T-cell (primary cell): ENCODE measurements at regions of chr6 and their contacts with region 1.

Region 1: DNA sequence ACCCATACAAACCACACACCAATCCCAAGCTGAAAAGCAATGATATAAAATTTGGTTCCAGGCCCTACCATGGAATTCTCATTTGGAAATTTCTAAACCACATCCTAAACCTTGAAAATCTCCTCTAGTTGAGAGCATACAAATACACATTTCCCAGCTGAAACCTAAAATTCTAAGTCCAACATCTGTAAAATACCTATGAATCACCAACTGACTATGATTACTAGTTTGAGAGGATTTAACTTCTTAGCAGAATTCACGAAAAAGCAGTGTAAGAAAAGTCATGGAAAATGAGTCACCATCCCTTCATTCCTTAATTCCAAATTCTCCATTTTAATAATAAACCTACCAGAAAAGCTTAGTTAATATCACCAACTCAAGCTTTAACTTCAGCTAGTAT is 15.4 kb downstream of the RANBP9 start:
- DNase-seq: no peak
- ATAC-seq: no peak
- H3K4me3 ChIP-seq: no peak overlapping the region
- H3K4me3 Mint-ChIP-seq: peak overlapping the region in 1 of 3 donors; percentile 22
- H3K27ac ChIP-seq: peak overlapping the region; percentile 65
- H3K27ac Mint-ChIP-seq: peak overlapping the region; percentile 89
- H3K4me1 ChIP-seq: peaks cover 21 to 27% of the 10 kb centered on the region in 2 experiments
- H3K4me1 Mint-ChIP-seq: peaks cover 64 to 86% (median 82%) of the 10 kb centered on the region in 3 donors
- H3K27me3 ChIP-seq: no peaks in the 10 kb centered on the region
- H3K27me3 Mint-ChIP-seq: no peaks in the 10 kb centered on the region

Region 2: GRCh38 chr6:12343440-12344162 is 1352.6 kb before region 1 on chr6:
- CTCF ChIA-PET with region 1: no interaction called
- POLR2A ChIA-PET with region 1: no interaction called
- DNase-seq: no peak
- ATAC-seq: no peak
- H3K4me3 ChIP-seq: no peak overlapping the region
- H3K4me3 Mint-ChIP-seq: no peak overlapping the region
- H3K27ac ChIP-seq: no peak overlapping the region
- H3K27ac Mint-ChIP-seq: no peak overlapping the region
- H3K4me1 ChIP-seq: no peaks in the 10 kb centered on the region
- H3K4me1 Mint-ChIP-seq: no peaks in the 10 kb centered on the region
- H3K27me3 ChIP-seq: peaks cover 0 to 15% of the 10 kb centered on the region in 2 experiments
- H3K27me3 Mint-ChIP-seq: peaks cover 7 to 8% of the 10 kb centered on the region in 2 donors

Region 3: GRCh38 chr6:12545619-12546409 is 1150.4 kb before region 1 on chr6:
- CTCF ChIA-PET with region 1: no interaction called
- POLR2A ChIA-PET with region 1: no interaction called
- DNase-seq: no peak
- ATAC-seq: no peak
- H3K4me3 ChIP-seq: no peak overlapping the region
- H3K4me3 Mint-ChIP-seq: no peak overlapping the region
- H3K27ac ChIP-seq: no peak overlapping the region
- H3K27ac Mint-ChIP-seq: no peak overlapping the region
- H3K4me1 ChIP-seq: no peaks in the 10 kb centered on the region
- H3K4me1 Mint-ChIP-seq: no peaks in the 10 kb centered on the region
- H3K27me3 ChIP-seq: no peaks in the 10 kb centered on the region
- H3K27me3 Mint-ChIP-seq: peaks cover 2 to 28% of the 10 kb centered on the region in 2 donors

Region 4: DNA sequence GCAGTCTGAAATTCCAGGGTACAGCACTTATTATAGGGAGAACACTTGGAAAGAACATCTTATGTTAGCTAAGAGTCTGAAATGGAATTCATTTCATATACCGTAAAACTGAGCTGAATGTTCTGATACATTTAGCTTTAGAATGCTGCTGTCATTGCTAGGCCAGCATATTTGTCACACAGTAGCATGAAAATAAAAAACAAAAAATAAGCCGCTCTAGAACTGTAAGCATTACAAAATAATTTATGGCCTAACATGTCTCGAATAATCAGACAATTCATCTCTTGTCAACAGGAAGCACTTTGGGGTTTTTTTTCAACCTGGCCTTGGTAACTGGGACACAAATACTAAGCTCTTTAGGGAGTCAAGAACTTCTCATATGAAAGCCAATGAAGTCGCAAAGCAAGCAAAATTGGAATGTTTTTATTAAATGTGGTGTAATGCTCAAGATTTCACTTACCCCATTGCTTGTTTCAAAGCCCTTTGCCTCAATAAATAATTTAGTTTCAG is 863.9 kb before region 1 on chr6:
- CTCF ChIA-PET with region 1: no interaction called
- POLR2A ChIA-PET with region 1: no interaction called
- DNase-seq: no peak
- ATAC-seq: no peak
- H3K4me3 ChIP-seq: no peak overlapping the region
- H3K4me3 Mint-ChIP-seq: no peak overlapping the region
- H3K27ac ChIP-seq: no peak overlapping the region
- H3K27ac Mint-ChIP-seq: no peak overlapping the region
- H3K4me1 ChIP-seq: no peaks in the 10 kb centered on the region
- H3K4me1 Mint-ChIP-seq: no peaks in the 10 kb centered on the region
- H3K27me3 ChIP-seq: peaks cover 0 to 2% of the 10 kb centered on the region in 2 experiments
- H3K27me3 Mint-ChIP-seq: peaks cover 9 to 15% of the 10 kb centered on the region in 2 donors

Region 5: GRCh38 chr6:13355043-13355951 is 340.9 kb before region 1 on chr6:
- CTCF ChIA-PET with region 1: no interaction called
- POLR2A ChIA-PET with region 1: interaction called in 1 of 2 experiments, 22 read pairs
- DNase-seq: peak in 5 of 35 experiments; percentile 6 to 59 (median 12)
- ATAC-seq: peak; percentile 56 to 78 (median 61)
- H3K4me3 ChIP-seq: peak overlapping the region; percentile 36 to 42
- H3K4me3 Mint-ChIP-seq: peak overlapping the region; percentile 67 to 83 (median 75)
- H3K27ac ChIP-seq: peak overlapping the region; percentile 81
- H3K27ac Mint-ChIP-seq: peak overlapping the region; percentile 88 to 91
- H3K4me1 ChIP-seq: peaks cover 29 to 30% of the 10 kb centered on the region in 2 experiments
- H3K4me1 Mint-ChIP-seq: peaks cover 34 to 48% (median 47%) of the 10 kb centered on the region in 3 donors
- H3K27me3 ChIP-seq: no peaks in the 10 kb centered on the region
- H3K27me3 Mint-ChIP-seq: no peaks in the 10 kb centered on the region

Region 6: DNA sequence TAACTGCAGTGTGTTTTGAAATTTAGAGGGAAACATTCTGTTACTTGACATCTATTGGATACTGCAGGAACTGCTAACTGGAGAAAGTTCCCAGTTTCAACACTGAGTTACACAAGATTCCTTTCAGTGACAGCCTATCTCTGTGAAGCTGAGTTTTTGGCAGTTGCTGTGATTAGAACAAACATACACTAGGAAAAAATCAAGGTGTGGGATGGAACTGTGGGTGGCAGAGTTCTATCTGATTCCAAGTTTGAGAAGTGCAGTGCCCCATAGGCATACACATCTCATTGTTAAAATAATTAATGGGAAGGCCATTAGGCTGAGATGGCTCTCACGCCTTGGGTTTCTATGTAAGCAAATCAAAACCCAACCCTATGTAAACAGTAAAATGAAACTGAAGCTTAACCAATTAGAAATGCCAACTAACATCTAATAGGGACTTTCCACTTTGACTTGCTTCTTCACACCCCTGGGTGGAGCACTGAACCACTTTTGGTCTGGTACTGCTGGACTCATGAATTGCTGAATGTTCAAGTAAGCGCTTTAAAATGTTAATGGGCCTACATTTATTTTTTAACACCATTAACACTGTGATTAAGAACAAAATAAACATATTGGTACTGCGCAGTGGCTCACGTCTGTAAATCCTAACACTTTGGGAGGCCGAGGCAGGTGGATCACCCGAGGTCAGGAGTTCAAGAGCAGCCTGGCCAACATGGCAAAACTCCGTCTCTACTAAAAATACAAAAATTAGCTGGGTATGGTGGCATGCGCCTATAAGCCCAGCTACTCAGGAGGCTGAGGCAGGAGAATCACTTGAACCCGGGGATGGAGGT is 312.7 kb before region 1 on chr6:
- CTCF ChIA-PET with region 1: no interaction called
- POLR2A ChIA-PET with region 1: no interaction called
- DNase-seq: peak in 13 of 35 experiments; percentile 8 to 67 (median 20)
- ATAC-seq: peak in 3 of 4 experiments; percentile 35 to 84 (median 43)
- H3K4me3 ChIP-seq: no peak overlapping the region
- H3K4me3 Mint-ChIP-seq: peak overlapping the region in 1 of 3 donors; percentile 21
- H3K27ac ChIP-seq: peak overlapping the region; percentile 34
- H3K27ac Mint-ChIP-seq: no peak overlapping the region
- H3K4me1 ChIP-seq: peaks cover 0 to 11% of the 10 kb centered on the region in 2 experiments
- H3K4me1 Mint-ChIP-seq: peaks cover 0 to 20% (median 8%) of the 10 kb centered on the region in 3 donors
- H3K27me3 ChIP-seq: no peaks in the 10 kb centered on the region
- H3K27me3 Mint-ChIP-seq: no peaks in the 10 kb centered on the region

Region 7: GRCh38 chr6:13624871-13625288 is 71.3 kb before region 1 on chr6:
- CTCF ChIA-PET with region 1: interaction called, 11 read pairs
- POLR2A ChIA-PET with region 1: no interaction called
- DNase-seq: peak in 22 of 35 experiments; percentile 6 to 67 (median 14)
- ATAC-seq: peak; percentile 57 to 82 (median 66)
- H3K4me3 ChIP-seq: no peak overlapping the region
- H3K4me3 Mint-ChIP-seq: no peak overlapping the region
- H3K27ac ChIP-seq: no peak overlapping the region
- H3K27ac Mint-ChIP-seq: peak overlapping the region; percentile 21 to 60
- H3K4me1 ChIP-seq: no peaks in the 10 kb centered on the region
- H3K4me1 Mint-ChIP-seq: peaks cover 8 to 12% (median 8%) of the 10 kb centered on the region in 3 donors
- H3K27me3 ChIP-seq: no peaks in the 10 kb centered on the region
- H3K27me3 Mint-ChIP-seq: no peaks in the 10 kb centered on the region

Region 8: DNA sequence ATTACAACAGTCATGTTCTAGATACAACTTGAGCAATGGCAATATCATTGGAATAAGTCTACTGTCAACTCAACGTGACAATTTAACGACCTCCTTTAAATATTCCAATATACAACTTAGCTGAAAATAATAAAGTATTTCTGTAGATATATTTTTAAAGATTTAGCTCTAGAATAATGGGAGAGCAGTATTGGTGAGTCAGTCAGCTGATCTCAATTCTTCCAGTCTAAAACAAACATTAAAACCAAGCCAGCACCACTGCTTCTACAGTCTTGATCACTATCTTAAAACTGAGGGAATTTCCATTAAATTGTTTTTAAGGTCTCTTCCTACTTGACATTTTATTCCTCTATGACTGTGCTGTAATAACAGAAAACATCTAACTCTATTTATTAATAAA is 42.9 kb before region 1 on chr6:
- CTCF ChIA-PET with region 1: interaction called in 1 of 2 experiments, 3 read pairs
- POLR2A ChIA-PET with region 1: interaction called in 1 of 2 experiments, 11 read pairs
- DNase-seq: no peak
- ATAC-seq: no peak
- H3K4me3 ChIP-seq: no peak overlapping the region
- H3K4me3 Mint-ChIP-seq: no peak overlapping the region
- H3K27ac ChIP-seq: no peak overlapping the region
- H3K27ac Mint-ChIP-seq: no peak overlapping the region
- H3K4me1 ChIP-seq: peaks cover 2 to 3% of the 10 kb centered on the region in 2 experiments
- H3K4me1 Mint-ChIP-seq: peaks cover 15 to 31% (median 26%) of the 10 kb centered on the region in 3 donors
- H3K27me3 ChIP-seq: no peaks in the 10 kb centered on the region
- H3K27me3 Mint-ChIP-seq: no peaks in the 10 kb centered on the region

Region 9: DNA sequence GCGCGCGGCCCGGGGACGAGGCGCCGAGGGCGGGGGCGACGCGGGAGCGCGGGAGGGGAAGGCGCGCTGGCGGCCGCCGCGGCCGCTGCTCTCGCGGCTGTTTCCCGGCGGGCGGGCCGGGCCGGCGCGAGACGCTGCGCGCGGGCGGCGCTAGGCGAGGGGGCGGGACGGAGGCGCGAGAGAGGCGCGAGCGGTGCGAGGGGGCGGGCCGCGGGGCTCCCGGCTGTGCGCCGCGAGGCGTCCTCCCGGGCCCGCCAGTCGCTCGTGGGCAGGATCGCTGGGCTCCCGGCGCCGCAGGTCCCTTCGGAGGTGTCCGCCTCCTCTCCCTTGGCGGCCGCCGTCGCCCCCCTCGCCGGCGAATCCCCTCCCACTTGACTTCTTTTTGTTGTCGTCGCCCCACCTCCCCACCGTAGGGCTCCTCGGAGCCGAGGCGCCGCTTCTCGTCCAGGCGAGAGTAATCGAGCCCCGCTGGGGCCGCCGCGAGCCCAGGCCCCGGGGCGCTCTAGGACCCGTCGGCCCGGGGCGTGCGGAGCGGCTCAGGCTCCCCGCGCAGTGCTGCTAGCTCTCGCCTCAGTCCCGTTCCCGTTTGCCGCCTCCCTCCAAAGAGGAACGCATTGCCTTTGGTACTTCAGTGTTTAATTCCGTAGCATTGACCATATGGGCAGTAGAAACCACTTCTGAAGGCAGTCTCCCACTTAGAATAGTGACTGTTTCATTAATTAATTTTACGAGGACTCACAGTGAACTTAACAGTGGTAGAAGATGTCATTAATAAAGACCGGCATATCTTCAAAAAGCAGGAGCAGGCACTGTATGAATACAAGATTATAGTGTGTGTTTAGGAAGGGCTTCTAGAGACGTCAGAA is 15.7 kb after region 1 on chr6 and contains the start of gene RANBP9:
- CTCF ChIA-PET with region 1: interaction called, 5 to 15 read pairs
- POLR2A ChIA-PET with region 1: interaction called in 1 of 2 experiments, 4 read pairs
- DNase-seq: peak; percentile 78 to 94 (median 85)
- ATAC-seq: peak; percentile 85 to 91 (median 87)
- H3K4me3 ChIP-seq: peak within 1 kb of the TSS; percentile 86
- H3K4me3 Mint-ChIP-seq: peak within 1 kb of the TSS; percentile 87 to 95 (median 94)
- H3K27ac ChIP-seq: peak within 1 kb of the TSS; percentile 92
- H3K27ac Mint-ChIP-seq: peak within 1 kb of the TSS; percentile 92 to 96
- H3K4me1 ChIP-seq: peaks cover 20 to 21% of the 10 kb centered on the region in 2 experiments
- H3K4me1 Mint-ChIP-seq: peaks cover 48 to 58% (median 55%) of the 10 kb centered on the region in 3 donors
- H3K27me3 ChIP-seq: no peaks in the 10 kb centered on the region
- H3K27me3 Mint-ChIP-seq: no peaks in the 10 kb centered on the region
- total RNA-seq, gene RANBP9: 44.9 to 59.4 (median 46.8) TPM

Region 10: GRCh38 chr6:13727876-13728275 is 31.6 kb after region 1 on chr6:
- CTCF ChIA-PET with region 1: no interaction called
- POLR2A ChIA-PET with region 1: interaction called in 1 of 2 experiments, 14 read pairs
- DNase-seq: no peak
- ATAC-seq: no peak
- H3K4me3 ChIP-seq: no peak overlapping the region
- H3K4me3 Mint-ChIP-seq: no peak overlapping the region
- H3K27ac ChIP-seq: no peak overlapping the region
- H3K27ac Mint-ChIP-seq: no peak overlapping the region
- H3K4me1 ChIP-seq: peaks cover 3 to 31% of the 10 kb centered on the region in 2 experiments
- H3K4me1 Mint-ChIP-seq: peaks cover 25 to 36% (median 32%) of the 10 kb centered on the region in 3 donors
- H3K27me3 ChIP-seq: no peaks in the 10 kb centered on the region
- H3K27me3 Mint-ChIP-seq: no peaks in the 10 kb centered on the region